ENCODE measurements at regions of chr10 and their contacts with region 1.

Region 1: GRCh38 chr10:93235686-93236085 is 162.0 kb downstream of the CYP26A1 start:
- DNase-seq: peak in 1 of 2 donors; percentile 19
- ATAC-seq: no peak
- H3K4me3 ChIP-seq: no peak overlapping the region
- H3K27ac ChIP-seq: no peak overlapping the region
- H3K4me1 ChIP-seq: no peaks in the 10 kb centered on the region
- H3K27me3 ChIP-seq: no peaks in the 10 kb centered on the region
- CTCF ChIP-seq: no peak
- POLR2A ChIP-seq: no peak

Region 2: GRCh38 chr10:93219347-93219746 is 16.3 kb before region 1 on chr10:
- in situ Hi-C with region 1: no loop called
- intact Hi-C with region 1: loop called (anchors 1 kb)
- DNase-seq: no peak
- ATAC-seq: no peak
- H3K4me3 ChIP-seq: no peak overlapping the region
- H3K27ac ChIP-seq: no peak overlapping the region
- H3K4me1 ChIP-seq: no peaks in the 10 kb centered on the region
- H3K27me3 ChIP-seq: no peaks in the 10 kb centered on the region
- CTCF ChIP-seq: no peak
- POLR2A ChIP-seq: no peak

Measured in gastrocnemius medialis (tissue), 4 donors.